Activated CD4-positive, alpha-beta T cell treated with anti-CD3 and anti-CD28 coated beads for 36 hours (primary cell): ENCODE measurements at regions of chr1 and their contacts with region 1.

Region 1: DNA sequence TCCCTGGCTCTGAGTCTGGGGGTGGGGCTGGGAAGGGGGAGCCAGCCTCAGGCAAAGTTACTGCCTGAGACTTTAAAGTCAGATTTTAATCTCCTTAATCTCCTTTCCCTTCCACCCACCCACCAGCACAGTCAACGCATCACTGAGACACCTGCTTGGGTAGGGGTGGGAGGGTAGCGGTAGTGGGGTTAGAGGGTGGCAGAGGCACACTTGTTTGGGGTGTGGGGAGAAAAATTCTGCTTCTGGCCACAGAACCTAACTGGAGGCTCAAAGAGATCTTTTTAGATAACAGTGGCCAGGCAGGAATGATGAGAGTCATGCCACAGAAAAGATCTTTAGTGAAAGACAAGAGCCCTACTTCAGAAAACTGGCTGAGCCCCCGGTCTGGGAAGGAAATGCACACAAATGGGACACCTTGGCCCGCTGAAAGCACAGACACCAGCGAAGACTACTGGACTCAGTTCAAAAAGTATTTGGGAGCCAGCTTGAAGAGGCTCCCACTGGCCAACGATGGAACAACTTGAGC is 44.1 kb downstream of the CD247 start:
- DNase-seq: peak; percentile 68
- ATAC-seq: peak; percentile 69
- H3K4me3 Mint-ChIP-seq: peak overlapping the region; percentile 42
- H3K27ac Mint-ChIP-seq: peak overlapping the region; percentile 81
- H3K4me1 Mint-ChIP-seq: peaks cover 85% of the 10 kb centered on the region
- H3K27me3 Mint-ChIP-seq: no peaks in the 10 kb centered on the region

Region 2: GRCh38 chr1:167196166-167196565 is 278.1 kb before region 1 on chr1:
- CTCF ChIA-PET with region 1: no interaction called
- POLR2A ChIA-PET with region 1: no interaction called
- intact Hi-C with region 1: no loop called
- DNase-seq: no peak
- ATAC-seq: peak; percentile 16
- H3K4me3 Mint-ChIP-seq: no peak overlapping the region
- H3K27ac Mint-ChIP-seq: peak overlapping the region; percentile 6
- H3K4me1 Mint-ChIP-seq: peaks cover 19% of the 10 kb centered on the region
- H3K27me3 Mint-ChIP-seq: no peaks in the 10 kb centered on the region

Region 3: GRCh38 chr1:167486090-167486824 is 12.0 kb after region 1 on chr1:
- CTCF ChIA-PET with region 1: interaction called, 11 read pairs
- POLR2A ChIA-PET with region 1: interaction called, 5 read pairs
- intact Hi-C with region 1: loop called in 1 of 2 experiments (anchors 1 kb)
- DNase-seq: peak; percentile 42
- ATAC-seq: no peak
- H3K4me3 Mint-ChIP-seq: peak overlapping the region; percentile 45
- H3K27ac Mint-ChIP-seq: peak overlapping the region; percentile 89
- H3K4me1 Mint-ChIP-seq: peaks cover 96% of the 10 kb centered on the region
- H3K27me3 Mint-ChIP-seq: no peaks in the 10 kb centered on the region

Region 4: GRCh38 chr1:167524651-167525050 is 50.4 kb after region 1 on chr1:
- CTCF ChIA-PET with region 1: no interaction called
- POLR2A ChIA-PET with region 1: interaction called, 10 read pairs
- intact Hi-C with region 1: no loop called
- DNase-seq: no peak
- ATAC-seq: no peak
- H3K4me3 Mint-ChIP-seq: no peak overlapping the region
- H3K27ac Mint-ChIP-seq: no peak overlapping the region
- H3K4me1 Mint-ChIP-seq: peaks cover 16% of the 10 kb centered on the region
- H3K27me3 Mint-ChIP-seq: no peaks in the 10 kb centered on the region

Region 5: GRCh38 chr1:167663002-167663772 is 188.9 kb after region 1 on chr1:
- CTCF ChIA-PET with region 1: no interaction called
- POLR2A ChIA-PET with region 1: no interaction called
- intact Hi-C with region 1: no loop called
- DNase-seq: no peak
- ATAC-seq: no peak
- H3K4me3 Mint-ChIP-seq: no peak overlapping the region
- H3K27ac Mint-ChIP-seq: no peak overlapping the region
- H3K4me1 Mint-ChIP-seq: peaks cover 78% of the 10 kb centered on the region
- H3K27me3 Mint-ChIP-seq: no peaks in the 10 kb centered on the region

Region 6: DNA sequence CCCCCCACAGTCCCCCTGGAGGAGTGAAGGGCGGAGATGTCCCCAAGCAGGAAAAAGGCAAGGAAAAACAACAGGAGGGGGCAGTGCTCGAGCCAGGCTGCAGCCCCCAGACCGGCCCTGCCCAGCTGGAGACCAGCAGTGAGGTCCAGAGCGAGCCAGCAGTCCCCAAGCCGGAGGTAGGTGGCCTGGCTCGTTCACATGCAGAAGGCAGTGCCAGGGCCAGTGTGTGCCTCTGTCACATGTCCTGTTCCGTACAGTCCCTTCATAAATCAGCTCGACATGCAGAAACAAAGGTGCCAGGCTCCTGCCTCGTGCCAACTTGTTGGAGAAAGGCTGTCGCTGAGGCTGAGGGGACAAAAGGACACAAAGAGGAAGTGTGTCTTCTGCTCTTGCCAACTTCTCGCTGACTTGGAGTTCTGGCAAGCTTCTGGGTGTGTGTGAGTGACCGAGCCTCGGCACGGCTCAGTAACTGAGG is 223.4 kb after region 1 on chr1:
- CTCF ChIA-PET with region 1: no interaction called
- POLR2A ChIA-PET with region 1: no interaction called
- intact Hi-C with region 1: no loop called
- DNase-seq: no peak
- ATAC-seq: no peak
- H3K4me3 Mint-ChIP-seq: no peak overlapping the region
- H3K27ac Mint-ChIP-seq: peak overlapping the region; percentile 8
- H3K4me1 Mint-ChIP-seq: no peaks in the 10 kb centered on the region
- H3K27me3 Mint-ChIP-seq: no peaks in the 10 kb centered on the region